PC-9 (cell line): ENCODE measurements at regions of chr2 and their contacts with region 1.

Region 1: GRCh38 chr2:203453858-203454451 is 81.1 kb downstream of the RAPH1 start:
- DNase-seq: no peak
- H3K4me3 ChIP-seq: no peak overlapping the region
- H3K27ac ChIP-seq: no peak overlapping the region
- H3K4me1 ChIP-seq: 0 out of 2 replicates have a peak, but pooled peaks cover 6% of the 10 kb centered on the region
- H3K27me3 ChIP-seq: no peaks in the 10 kb centered on the region
- CTCF ChIP-seq: peak; percentile 73

Region 2: GRCh38 chr2:202577250-202578183 is 876.4 kb before region 1 on chr2:
- CTCF ChIA-PET with region 1: interaction called, 24 read pairs
- POLR2A ChIA-PET with region 1: no interaction called
- intact Hi-C with region 1: loop called (anchors 1 kb)
- DNase-seq: no peak
- H3K4me3 ChIP-seq: no peak overlapping the region
- H3K27ac ChIP-seq: no peak overlapping the region
- H3K4me1 ChIP-seq: no peaks in the 10 kb centered on the region
- H3K27me3 ChIP-seq: no peaks in the 10 kb centered on the region
- CTCF ChIP-seq: no peak

Region 3: DNA sequence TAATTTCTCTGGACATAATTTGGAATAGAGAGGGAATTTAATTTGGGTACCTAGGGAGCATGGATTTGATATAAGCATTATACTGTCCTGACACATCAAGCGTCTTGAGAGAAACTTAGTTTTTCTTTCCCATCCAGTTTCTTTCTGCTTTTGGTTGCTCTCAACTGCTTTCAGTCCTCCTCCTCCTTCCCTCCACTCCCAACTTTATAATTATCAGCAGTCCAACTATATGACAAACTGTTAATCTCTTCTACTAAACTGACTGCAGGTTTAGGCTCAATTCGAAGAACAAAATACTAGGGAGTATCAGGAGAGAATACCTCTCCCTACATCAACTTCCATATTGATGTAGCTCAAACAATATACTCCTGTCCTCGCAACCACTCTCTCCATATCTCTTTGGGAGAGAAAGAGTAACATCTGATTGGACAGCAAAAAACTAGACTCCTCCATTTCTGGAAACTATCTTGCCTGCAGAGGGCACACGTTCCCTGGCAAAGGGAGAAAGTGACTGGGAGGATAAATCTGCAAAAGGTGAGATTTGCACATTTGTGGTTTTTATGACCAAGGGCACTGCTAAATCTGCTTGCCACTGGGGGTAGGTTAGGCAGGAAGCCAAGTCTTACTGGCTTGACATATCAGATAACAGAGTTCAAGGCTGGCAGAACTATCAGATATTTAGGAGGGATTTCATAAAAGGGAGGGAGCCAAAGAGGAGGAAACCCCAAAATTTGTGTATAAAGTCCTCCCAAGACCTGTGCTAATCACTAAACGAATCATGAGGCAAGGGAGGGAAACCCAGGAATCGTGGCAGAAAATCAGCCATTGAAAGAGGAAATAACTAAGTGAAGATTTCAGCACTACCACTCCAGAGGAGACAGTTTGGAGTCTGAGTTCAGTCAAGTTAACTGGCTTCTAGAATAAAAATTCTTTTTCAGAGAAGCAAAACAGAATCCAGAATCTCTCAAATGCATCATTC is 622.4 kb before region 1 on chr2:
- CTCF ChIA-PET with region 1: no interaction called
- POLR2A ChIA-PET with region 1: no interaction called
- intact Hi-C with region 1: loop called (anchors 10 kb)
- DNase-seq: peak; percentile 29 to 47
- H3K4me3 ChIP-seq: no peak overlapping the region
- H3K27ac ChIP-seq: no peak overlapping the region
- H3K4me1 ChIP-seq: 0 out of 2 replicates have a peak, but pooled peaks cover 5% of the 10 kb centered on the region
- H3K27me3 ChIP-seq: no peaks in the 10 kb centered on the region
- CTCF ChIP-seq: peak; percentile 63

Region 4: DNA sequence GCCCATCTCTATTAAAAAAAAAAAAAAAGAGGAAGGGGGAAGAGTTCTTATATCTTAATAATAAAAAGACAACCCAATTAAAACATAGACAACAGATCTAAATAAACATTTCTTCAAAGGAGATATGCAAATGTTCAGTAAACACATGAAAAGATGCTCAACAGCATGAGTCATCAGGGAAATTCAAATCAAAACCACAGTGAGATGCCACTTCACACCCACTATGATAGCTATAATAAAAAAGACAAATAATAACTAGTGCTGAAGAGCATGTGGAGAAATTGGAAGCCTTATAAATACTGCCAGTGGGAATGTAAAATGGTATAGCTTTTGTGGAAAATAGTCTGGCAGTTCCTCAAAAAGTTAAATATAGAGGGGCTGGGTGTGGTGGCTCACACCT is 276.6 kb before region 1 on chr2:
- CTCF ChIA-PET with region 1: interaction called, 10 read pairs
- POLR2A ChIA-PET with region 1: no interaction called
- intact Hi-C with region 1: no loop called
- DNase-seq: no peak
- H3K4me3 ChIP-seq: no peak overlapping the region
- H3K27ac ChIP-seq: no peak overlapping the region
- H3K4me1 ChIP-seq: no peaks in the 10 kb centered on the region
- H3K27me3 ChIP-seq: no peaks in the 10 kb centered on the region
- CTCF ChIP-seq: no peak

Region 5: DNA sequence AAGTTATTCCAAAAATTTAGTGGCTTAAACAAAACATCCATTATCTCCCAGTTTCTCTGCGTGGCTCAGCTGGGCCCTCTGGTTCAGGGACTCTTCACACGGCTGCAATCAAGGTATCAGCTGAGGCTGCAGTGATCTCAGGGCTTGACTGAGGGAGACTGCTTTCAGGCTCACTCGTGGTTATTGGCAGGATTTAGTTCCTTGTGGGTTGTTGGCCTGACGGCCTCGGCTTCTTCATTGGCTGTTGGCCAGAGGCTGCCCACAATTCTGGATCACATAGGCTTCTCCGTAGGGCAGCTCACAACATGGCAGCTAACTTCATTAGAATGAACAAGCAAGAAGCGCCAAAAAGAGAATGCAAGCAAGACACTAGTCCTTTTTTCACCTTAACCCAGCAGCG is 35.7 kb before region 1 on chr2:
- CTCF ChIA-PET with region 1: interaction called, 11 read pairs
- POLR2A ChIA-PET with region 1: no interaction called
- intact Hi-C with region 1: no loop called
- DNase-seq: no peak
- H3K4me3 ChIP-seq: no peak overlapping the region
- H3K27ac ChIP-seq: no peak overlapping the region
- H3K4me1 ChIP-seq: no peaks in the 10 kb centered on the region
- H3K27me3 ChIP-seq: no peaks in the 10 kb centered on the region
- CTCF ChIP-seq: no peak